ENCODE measurements at regions of chr12 and their contacts with region 1.

Region 1: GRCh38 chr12:109606320-109607028 is 32.9 kb downstream of the MVK start:
- DNase-seq: peak in 2 of 3 donors; percentile 72 to 74
- ATAC-seq: peak; percentile 63 to 67
- H3K4me3 ChIP-seq: no peak overlapping the region
- H3K27ac ChIP-seq: peak overlapping the region; percentile 37
- H3K4me1 ChIP-seq: no peaks in the 10 kb centered on the region
- H3K27me3 ChIP-seq: no peaks in the 10 kb centered on the region

Region 2: GRCh38 chr12:109713187-109713984 is 106.9 kb after region 1 on chr12 and contains the start of gene FAM222A:
- intact Hi-C with region 1: loop called in 1 of 4 experiments (anchors 10 kb)
- DNase-seq: peak; percentile 97 to 99 (median 99)
- ATAC-seq: peak; percentile 96 to 97
- H3K4me3 ChIP-seq: peak within 1 kb of the TSS; percentile 84
- H3K27ac ChIP-seq: peak within 1 kb of the TSS; percentile 57
- H3K4me1 ChIP-seq: peaks cover 10% of the 10 kb centered on the region
- H3K27me3 ChIP-seq: no peaks in the 10 kb centered on the region
- total RNA-seq, gene FAM222A: 9.3 to 16.4 (median 10.0) TPM

Region 3: GRCh38 chr12:109797905-109798669 is 191.6 kb after region 1 on chr12:
- intact Hi-C with region 1: no loop called
- DNase-seq: no peak
- ATAC-seq: peak in 1 of 2 donors; percentile 30
- H3K4me3 ChIP-seq: no peak overlapping the region
- H3K27ac ChIP-seq: no peak overlapping the region
- H3K4me1 ChIP-seq: no peaks in the 10 kb centered on the region
- H3K27me3 ChIP-seq: no peaks in the 10 kb centered on the region

Measured in right cardiac atrium (tissue), 5 donors.